Gastrocnemius medialis (tissue), 4 donors: ENCODE measurements at regions of chr7 and their contacts with region 1.

Region 1: GRCh38 chr7:104923010-104923421 is 91.0 kb upstream of the KMT2E start:
- DNase-seq: peak; percentile 34 to 47
- ATAC-seq: peak; percentile 65 to 68
- H3K4me3 ChIP-seq: no peak overlapping the region
- H3K27ac ChIP-seq: peak overlapping the region in 3 of 4 donors; percentile 14 to 48 (median 44)
- H3K4me1 ChIP-seq: peaks cover 0 to 3% of the 10 kb centered on the region in 2 donors
- H3K27me3 ChIP-seq: no peaks in the 10 kb centered on the region
- CTCF ChIP-seq: peak; percentile 40 to 68 (median 57)
- POLR2A ChIP-seq: no peak

Region 2: GRCh38 chr7:104883718-104884452 is 39.1 kb before region 1 on chr7:
- in situ Hi-C with region 1: loop called in 1 of 4 experiments (anchors 5 kb)
- intact Hi-C with region 1: loop called (anchors 1 kb)
- DNase-seq: peak; percentile 44 to 75
- ATAC-seq: peak; percentile 90 to 96
- H3K4me3 ChIP-seq: peak overlapping the region in 3 of 4 donors; percentile 14 to 21 (median 17)
- H3K27ac ChIP-seq: peak overlapping the region; percentile 42 to 67 (median 58)
- H3K4me1 ChIP-seq: peaks cover 7 to 11% of the 10 kb centered on the region in 2 donors
- H3K27me3 ChIP-seq: no peaks in the 10 kb centered on the region
- CTCF ChIP-seq: peak; percentile 66 to 88 (median 83)
- POLR2A ChIP-seq: no peak